ENCODE measurements at regions of chr7 and their contacts with region 1.

Region 1: GRCh38 chr7:157386979-157387800 is 50.4 kb downstream of the DNAJB6 start:
- DNase-seq: peak; percentile 97
- H3K4me3 Mint-ChIP-seq: no peak overlapping the region
- H3K27ac Mint-ChIP-seq: peak overlapping the region; percentile 38
- H3K4me1 Mint-ChIP-seq: peaks cover 34% of the 10 kb centered on the region
- H3K27me3 Mint-ChIP-seq: no peaks in the 10 kb centered on the region

Region 2: DNA sequence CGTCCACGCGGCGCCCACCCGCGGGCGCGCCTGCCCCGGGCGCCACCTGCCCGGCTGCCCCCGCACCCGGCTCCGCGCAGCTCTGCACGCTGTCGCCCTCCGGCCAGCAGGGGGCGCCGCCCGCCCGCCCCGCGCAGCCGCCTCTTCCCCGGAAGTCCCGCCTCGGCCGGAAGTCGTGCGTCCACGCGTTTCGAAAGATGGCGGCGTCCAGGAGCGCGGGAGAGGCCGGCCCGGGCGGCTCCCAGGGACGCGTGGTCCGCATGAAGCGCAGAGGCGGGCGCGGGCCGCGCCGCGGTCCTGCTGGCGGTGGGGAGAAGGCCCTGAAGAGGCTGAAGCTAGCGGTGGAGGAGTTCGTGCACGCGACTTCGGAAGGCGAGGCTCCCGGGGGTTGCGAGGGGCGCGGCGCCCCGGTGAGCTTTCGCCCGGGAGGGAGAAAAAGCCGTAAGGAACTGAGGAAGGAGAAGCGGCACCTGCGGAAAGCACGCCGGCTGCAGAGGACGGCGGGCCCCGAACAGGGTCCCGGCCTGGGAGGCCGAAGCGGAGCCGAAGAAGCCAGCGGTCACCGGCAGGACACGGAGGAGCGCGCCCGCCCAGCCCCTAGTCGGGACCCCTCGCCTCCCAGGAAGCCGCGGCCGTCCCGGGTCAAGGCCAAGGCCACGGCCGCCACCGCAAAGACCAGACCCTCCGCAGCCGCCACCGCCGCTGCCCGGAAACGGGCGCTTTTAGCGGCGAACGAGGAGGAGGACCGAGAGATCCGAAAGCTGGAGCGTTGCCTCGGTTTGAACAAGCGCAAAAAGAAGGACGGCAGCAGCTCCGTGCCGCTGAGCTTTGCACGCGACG is 437.4 kb before region 1 on chr7 and contains the start of gene NOM1:
- CTCF ChIA-PET with region 1: no interaction called
- intact Hi-C with region 1: loop called (anchors 10 kb)
- DNase-seq: peak; percentile 92
- H3K4me3 Mint-ChIP-seq: peak within 1 kb of the TSS; percentile 90
- H3K27ac Mint-ChIP-seq: peak within 1 kb of the TSS; percentile 53
- H3K4me1 Mint-ChIP-seq: peaks cover 37% of the 10 kb centered on the region
- H3K27me3 Mint-ChIP-seq: peaks cover 12% of the 10 kb centered on the region
- total RNA-seq, gene NOM1: 26.0 to 28.3 TPM

Region 3: DNA sequence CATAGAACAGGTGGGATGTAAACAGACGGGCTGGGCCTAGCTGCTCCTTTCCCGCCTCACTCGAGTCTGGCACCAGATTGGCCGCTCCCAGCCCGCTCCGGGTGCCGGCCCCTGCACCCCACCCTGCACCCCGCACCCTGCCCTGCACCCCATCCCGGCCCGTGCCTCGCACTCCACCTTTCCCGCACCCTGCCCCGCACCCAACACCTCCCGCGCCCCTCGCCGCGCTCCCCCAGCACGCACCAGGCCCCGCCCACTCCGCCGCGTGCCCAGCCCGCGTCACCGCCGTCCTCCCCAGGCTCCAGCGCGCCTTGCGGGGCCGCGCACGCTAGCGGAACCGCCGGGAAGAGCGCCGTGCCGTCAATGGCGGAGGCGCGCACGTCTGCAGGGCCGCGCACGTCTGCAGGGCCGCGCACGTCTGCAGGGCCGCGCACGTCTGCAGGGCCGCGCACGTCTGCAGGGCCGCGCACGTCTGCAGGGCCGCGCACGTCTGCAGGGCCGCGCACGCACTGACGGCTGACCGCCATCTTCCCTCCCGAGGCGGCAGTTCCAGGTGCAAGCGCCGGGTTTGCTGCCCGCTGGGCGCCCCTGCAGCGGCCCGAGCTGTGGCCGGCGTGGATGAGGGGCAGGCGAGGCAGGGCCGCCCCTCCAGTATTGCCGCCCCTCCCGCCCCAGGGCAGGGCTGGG is 248.6 kb before region 1 on chr7 and contains the start of gene UBE3C:
- CTCF ChIA-PET with region 1: no interaction called
- intact Hi-C with region 1: loop called (anchors 1 kb)
- DNase-seq: peak; percentile 87
- H3K4me3 Mint-ChIP-seq: peak within 1 kb of the TSS; percentile 84
- H3K27ac Mint-ChIP-seq: peak within 1 kb of the TSS; percentile 92
- H3K4me1 Mint-ChIP-seq: peaks cover 38% of the 10 kb centered on the region
- H3K27me3 Mint-ChIP-seq: no peaks in the 10 kb centered on the region
- total RNA-seq, gene UBE3C: 52.9 to 55.7 TPM

Region 4: DNA sequence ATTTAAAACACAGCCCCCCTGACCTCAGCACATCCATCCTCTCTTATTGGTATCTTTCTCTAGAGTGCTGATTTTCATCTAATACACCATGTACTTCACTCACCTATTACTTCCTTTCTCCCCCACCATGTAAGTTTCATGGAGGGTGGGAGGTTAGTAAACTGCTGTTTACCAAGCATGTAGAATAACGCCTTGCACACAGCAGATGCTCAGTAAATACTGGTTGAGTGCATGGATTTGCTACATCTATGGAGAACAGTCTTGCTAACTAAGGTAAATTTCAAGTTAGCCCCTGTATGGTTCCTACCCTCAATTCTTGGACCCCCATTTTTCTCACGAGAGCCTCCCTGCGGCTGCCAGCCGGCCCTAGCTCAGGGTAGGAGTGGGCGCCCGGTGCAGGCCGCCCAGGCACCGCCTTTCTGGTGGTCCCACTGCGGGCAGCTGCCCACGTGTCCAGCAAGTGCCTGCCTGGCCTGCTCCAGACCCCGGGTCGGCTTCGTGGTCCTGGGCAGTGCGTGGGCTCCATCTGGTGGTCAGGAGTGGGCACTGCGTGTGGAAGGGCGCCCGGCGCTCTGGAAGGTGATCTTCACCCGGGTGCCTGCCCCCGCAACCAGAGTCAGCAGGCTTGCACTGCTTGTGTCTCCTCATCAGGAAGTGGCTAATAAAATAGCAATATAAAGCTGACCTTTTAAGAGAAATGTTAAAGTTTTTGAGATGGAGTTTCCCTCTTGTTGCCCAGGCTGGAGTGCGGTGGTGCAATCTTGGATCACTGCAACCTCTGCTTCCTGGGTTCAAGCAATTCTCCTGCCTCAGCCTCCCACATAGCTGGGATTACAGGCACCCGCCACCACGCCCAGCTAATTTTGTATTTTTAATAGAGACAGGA is 113.7 kb before region 1 on chr7:
- CTCF ChIA-PET with region 1: interaction called, 7 read pairs
- intact Hi-C with region 1: loop called (anchors 1 kb)
- DNase-seq: peak; percentile 66
- H3K4me3 Mint-ChIP-seq: no peak overlapping the region
- H3K27ac Mint-ChIP-seq: no peak overlapping the region
- H3K4me1 Mint-ChIP-seq: peaks cover 16% of the 10 kb centered on the region
- H3K27me3 Mint-ChIP-seq: peaks cover 9% of the 10 kb centered on the region

Region 5: GRCh38 chr7:157336383-157337315 is 50.5 kb before region 1 on chr7 and contains the start of gene DNAJB6:
- CTCF ChIA-PET with region 1: interaction called, 9 read pairs
- intact Hi-C with region 1: loop called (anchors 1 kb)
- DNase-seq: peak; percentile 95
- H3K4me3 Mint-ChIP-seq: peak within 1 kb of the TSS; percentile 92
- H3K27ac Mint-ChIP-seq: peak within 1 kb of the TSS; percentile 95
- H3K4me1 Mint-ChIP-seq: peaks cover 39% of the 10 kb centered on the region
- H3K27me3 Mint-ChIP-seq: no peaks in the 10 kb centered on the region
- total RNA-seq, gene DNAJB6: 69.0 to 72.1 TPM

Region 6: DNA sequence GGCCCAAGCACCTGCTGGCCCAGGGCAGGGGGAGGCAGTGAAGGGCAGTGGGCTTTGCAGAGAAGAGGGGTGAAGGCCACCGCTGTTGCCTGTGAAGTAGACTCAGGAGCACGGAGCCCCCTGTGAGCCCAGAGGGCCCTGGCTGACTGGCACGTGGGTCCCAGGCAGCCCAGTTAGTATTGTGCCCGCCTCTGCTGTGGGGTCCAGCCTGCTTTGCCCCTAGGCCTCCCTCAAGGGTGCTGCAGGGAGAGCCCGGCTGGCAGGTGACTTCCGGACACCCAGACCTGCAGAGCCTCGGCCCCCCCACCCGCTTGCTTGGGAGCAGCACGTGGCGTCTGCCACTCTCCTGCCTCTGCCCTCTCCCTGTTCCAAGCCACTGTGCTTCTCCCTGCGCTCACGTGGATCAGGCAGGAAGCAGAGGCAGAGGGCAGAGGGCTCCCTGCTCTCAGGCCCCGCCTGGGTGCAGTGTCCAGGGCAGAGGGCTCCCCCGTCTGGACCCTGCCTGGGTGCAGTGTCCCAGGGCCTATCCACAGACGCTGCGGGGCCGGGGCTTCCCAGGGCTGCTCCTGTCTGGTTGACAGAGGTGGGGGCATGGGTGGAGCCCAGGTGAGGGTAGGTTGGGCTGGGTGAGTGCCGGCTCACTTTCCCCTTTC is 38.0 kb after region 1 on chr7:
- CTCF ChIA-PET with region 1: no interaction called
- intact Hi-C with region 1: no loop called
- DNase-seq: no peak
- H3K4me3 Mint-ChIP-seq: no peak overlapping the region
- H3K27ac Mint-ChIP-seq: no peak overlapping the region
- H3K4me1 Mint-ChIP-seq: no peaks in the 10 kb centered on the region
- H3K27me3 Mint-ChIP-seq: no peaks in the 10 kb centered on the region

Region 7: GRCh38 chr7:157464111-157464970 is 77.2 kb after region 1 on chr7:
- CTCF ChIA-PET with region 1: no interaction called
- intact Hi-C with region 1: no loop called
- DNase-seq: no peak
- H3K4me3 Mint-ChIP-seq: no peak overlapping the region
- H3K27ac Mint-ChIP-seq: no peak overlapping the region
- H3K4me1 Mint-ChIP-seq: peaks cover 9% of the 10 kb centered on the region
- H3K27me3 Mint-ChIP-seq: no peaks in the 10 kb centered on the region